Aorta (tissue), 5 donors: ENCODE measurements at regions of chr9 and their contacts with region 1.

Region 1: GRCh38 chr9:13450723-13451122 is 171.2 kb upstream of the MPDZ start:
- DNase-seq: no peak
- ATAC-seq: no peak
- H3K4me3 ChIP-seq: no peak overlapping the region
- H3K27ac ChIP-seq: no peak overlapping the region
- H3K4me1 ChIP-seq: no peaks in the 10 kb centered on the region
- H3K27me3 ChIP-seq: no peaks in the 10 kb centered on the region

Region 2: DNA sequence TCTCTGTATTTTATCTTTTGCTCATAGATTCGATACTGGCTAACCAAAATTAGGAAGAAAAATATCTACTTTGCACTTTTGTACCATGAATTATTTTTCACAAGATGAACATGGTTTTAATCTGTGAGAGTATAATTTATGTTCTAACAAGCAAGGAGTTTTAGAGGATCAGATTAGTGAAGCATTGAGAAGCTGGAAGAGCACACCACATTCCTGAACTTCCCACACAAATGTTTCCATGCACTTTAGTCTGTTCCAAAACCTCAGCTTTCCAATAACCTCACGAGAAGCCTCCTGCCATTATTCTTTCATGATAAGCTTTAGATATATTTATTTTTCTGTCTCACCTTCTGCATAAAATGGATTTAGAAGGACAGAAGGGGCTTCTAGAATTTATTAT is 72.6 kb before region 1 on chr9:
- intact Hi-C with region 1: no loop called
- DNase-seq: no peak
- ATAC-seq: no peak
- H3K4me3 ChIP-seq: no peak overlapping the region
- H3K27ac ChIP-seq: no peak overlapping the region
- H3K4me1 ChIP-seq: peaks cover 0 to 2% of the 10 kb centered on the region in 2 donors
- H3K27me3 ChIP-seq: no peaks in the 10 kb centered on the region

Region 3: GRCh38 chr9:13500034-13500433 is 49.3 kb after region 1 on chr9:
- intact Hi-C with region 1: loop called in 1 of 2 experiments (anchors 10 kb)
- DNase-seq: no peak
- ATAC-seq: no peak
- H3K4me3 ChIP-seq: no peak overlapping the region
- H3K27ac ChIP-seq: no peak overlapping the region
- H3K4me1 ChIP-seq: peaks cover 0 to 2% of the 10 kb centered on the region in 2 donors
- H3K27me3 ChIP-seq: no peaks in the 10 kb centered on the region

Region 4: DNA sequence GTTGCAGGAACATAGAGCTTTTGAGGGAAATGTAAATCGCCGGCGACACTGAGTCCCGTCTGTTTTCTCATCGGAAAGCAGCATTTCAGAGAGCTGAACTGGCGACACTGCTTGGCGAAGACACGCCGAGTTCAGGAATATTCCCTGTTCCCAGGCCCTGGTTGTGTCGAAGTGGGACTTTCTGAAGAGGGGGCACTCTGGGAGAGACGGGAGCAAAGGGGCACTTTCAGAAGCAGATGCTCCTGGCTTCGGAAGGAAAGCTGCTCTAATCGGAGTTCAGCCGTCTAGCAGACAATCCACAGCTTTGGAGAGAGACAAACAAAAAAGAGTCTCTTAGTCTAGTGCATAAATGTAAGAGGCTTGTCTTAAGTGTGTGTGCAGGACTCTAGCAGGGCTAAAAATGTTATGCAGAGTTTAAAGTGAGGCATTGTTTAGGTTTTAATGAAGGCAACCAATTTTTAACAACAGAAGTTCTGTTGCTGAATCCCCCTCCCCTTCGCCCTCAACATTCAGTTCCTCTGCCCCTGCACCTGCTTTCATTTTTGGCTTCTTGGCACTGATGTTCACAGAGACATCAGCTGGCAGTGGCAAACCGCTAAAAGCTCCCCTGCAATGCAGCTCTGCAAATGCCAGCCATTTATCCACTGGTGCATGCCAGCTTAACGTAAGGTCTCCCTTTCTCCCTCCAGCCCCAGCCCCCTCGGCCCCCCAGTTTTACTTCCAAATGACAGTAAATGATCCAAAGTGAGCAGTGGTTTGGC is 118.3 kb after region 1 on chr9:
- intact Hi-C with region 1: loop called in 1 of 2 experiments (anchors 10 kb)
- DNase-seq: no peak
- ATAC-seq: peak; percentile 10
- H3K4me3 ChIP-seq: peak overlapping the region in 1 of 2 donors; percentile 36
- H3K27ac ChIP-seq: peak overlapping the region; percentile 87 to 93
- H3K4me1 ChIP-seq: peaks cover 3 to 5% of the 10 kb centered on the region in 2 donors
- H3K27me3 ChIP-seq: no peaks in the 10 kb centered on the region